Activated naive CD4-positive, alpha-beta T cell treated with anti-CD3 and anti-CD28 coated beads, Interleukin-2, amount 10 ng/mL, durations not matched to agents 7 days and 5 days (primary cell): ENCODE measurements at regions of chr3 and their contacts with region 1.

Region 1: GRCh38 chr3:186241910-186242821 is 119.9 kb downstream of the DGKG start:
- DNase-seq: peak; percentile 76
- H3K4me3 Mint-ChIP-seq: no peak overlapping the region
- H3K27ac Mint-ChIP-seq: no peak overlapping the region
- H3K4me1 Mint-ChIP-seq: peaks cover 20% of the 10 kb centered on the region
- H3K27me3 Mint-ChIP-seq: peaks cover 25% of the 10 kb centered on the region

Region 2: GRCh38 chr3:185976977-185977678 is 265.0 kb before region 1 on chr3:
- CTCF ChIA-PET with region 1: interaction called, 11 read pairs
- DNase-seq: peak; percentile 88
- H3K4me3 Mint-ChIP-seq: no peak overlapping the region
- H3K27ac Mint-ChIP-seq: no peak overlapping the region
- H3K4me1 Mint-ChIP-seq: peaks cover 9% of the 10 kb centered on the region
- H3K27me3 Mint-ChIP-seq: peaks cover 4% of the 10 kb centered on the region

Region 3: GRCh38 chr3:185983495-185984141 is 258.5 kb before region 1 on chr3:
- CTCF ChIA-PET with region 1: interaction called, 32 read pairs
- DNase-seq: peak; percentile 65
- H3K4me3 Mint-ChIP-seq: no peak overlapping the region
- H3K27ac Mint-ChIP-seq: no peak overlapping the region
- H3K4me1 Mint-ChIP-seq: no peaks in the 10 kb centered on the region
- H3K27me3 Mint-ChIP-seq: peaks cover 29% of the 10 kb centered on the region